ENCODE measurements at regions of chr11 and their contacts with region 1.

Region 1: DNA sequence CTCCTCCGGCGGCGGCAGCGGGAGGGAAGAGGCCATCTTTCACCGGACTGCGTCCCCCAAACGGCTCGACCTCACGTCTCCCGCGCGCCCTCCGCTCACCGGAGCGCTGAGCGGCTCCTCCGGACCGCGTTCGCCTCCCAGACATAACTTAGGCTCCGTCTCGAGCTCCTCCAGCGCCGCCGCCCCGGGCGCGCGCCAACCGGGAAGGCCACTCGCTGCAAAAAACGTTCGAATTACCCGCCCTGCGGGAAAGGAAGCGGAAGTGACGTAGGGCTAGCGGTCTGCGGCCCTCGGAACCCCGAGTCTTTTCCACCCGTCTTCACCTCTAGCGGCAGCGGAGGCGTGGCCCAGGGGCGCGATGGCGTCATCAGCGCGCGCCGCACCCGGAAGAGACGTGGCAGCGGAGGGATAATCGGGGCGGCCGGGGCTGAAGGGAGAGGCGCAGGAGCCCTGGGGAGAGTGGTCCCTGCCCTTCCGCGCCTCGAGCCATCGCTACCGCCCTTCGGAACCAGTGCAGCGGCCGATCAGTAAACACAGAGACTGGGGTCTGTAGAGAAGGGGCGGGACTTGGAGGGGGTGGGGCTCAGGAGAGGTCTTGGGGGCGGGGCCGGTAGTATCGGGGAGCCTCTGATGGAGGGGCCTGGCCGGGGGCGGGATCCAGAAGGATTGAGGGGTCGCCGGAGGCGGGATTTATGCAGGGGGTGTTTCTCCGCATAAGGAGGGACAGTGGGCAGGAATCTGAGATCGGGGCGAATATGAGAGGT is at the starts of genes CDCA5 and ZFPL1:
- DNase-seq: peak; percentile 97
- ATAC-seq: peak; percentile 81
- H3K4me3 Mint-ChIP-seq: peak within 1 kb of the TSS; percentile 99
- H3K27ac Mint-ChIP-seq: peak within 1 kb of the TSS; percentile 98
- H3K4me1 Mint-ChIP-seq: peaks cover 41% of the 10 kb centered on the region
- H3K27me3 Mint-ChIP-seq: no peaks in the 10 kb centered on the region
- total RNA-seq, gene CDCA5: 111 to 119 TPM
- total RNA-seq, gene ZFPL1: 24.2 to 31.8 TPM

Region 2: DNA sequence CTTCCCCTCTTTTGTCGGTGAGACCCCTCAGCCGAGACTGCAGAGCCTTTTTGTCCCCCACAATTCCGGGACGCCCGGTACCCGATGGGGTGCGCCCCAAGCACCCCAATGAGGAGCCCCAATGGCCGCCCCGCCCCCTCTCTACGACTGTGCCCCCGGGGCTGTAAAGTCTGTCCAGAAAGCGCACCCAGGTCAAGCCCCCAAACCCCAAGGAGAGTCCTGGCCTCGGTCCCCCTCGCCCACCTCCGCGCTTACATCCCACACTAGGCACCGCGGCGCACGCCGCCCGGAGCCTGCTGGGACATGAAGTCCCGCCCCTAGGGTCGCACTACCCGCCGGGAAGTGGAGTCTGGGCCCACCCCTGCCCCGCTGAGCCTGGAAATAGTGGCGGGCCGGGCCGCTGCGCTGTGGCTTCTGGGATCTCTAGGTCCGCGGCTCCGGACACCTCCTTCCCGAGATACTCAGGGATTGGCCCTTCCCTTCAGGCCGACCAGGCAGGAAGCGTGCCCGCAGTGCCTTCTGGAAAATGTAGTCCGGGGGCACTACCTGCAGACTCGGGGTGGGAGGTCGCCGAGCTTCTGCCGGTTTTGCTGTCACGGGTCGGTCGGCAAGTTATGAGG is 273.6 kb before region 1 on chr11 and contains the start of gene MEN1:
- CTCF ChIA-PET with region 1: no interaction called
- POLR2A ChIA-PET with region 1: no interaction called
- intact Hi-C with region 1: loop called in 1 of 2 experiments (anchors 1 kb)
- DNase-seq: peak; percentile 92
- ATAC-seq: peak; percentile 95
- H3K4me3 Mint-ChIP-seq: peak within 1 kb of the TSS; percentile 93
- H3K27ac Mint-ChIP-seq: peak within 1 kb of the TSS; percentile 85
- H3K4me1 Mint-ChIP-seq: peaks cover 21% of the 10 kb centered on the region
- H3K27me3 Mint-ChIP-seq: no peaks in the 10 kb centered on the region
- total RNA-seq, gene MEN1: 34.8 to 38.5 TPM

Region 3: DNA sequence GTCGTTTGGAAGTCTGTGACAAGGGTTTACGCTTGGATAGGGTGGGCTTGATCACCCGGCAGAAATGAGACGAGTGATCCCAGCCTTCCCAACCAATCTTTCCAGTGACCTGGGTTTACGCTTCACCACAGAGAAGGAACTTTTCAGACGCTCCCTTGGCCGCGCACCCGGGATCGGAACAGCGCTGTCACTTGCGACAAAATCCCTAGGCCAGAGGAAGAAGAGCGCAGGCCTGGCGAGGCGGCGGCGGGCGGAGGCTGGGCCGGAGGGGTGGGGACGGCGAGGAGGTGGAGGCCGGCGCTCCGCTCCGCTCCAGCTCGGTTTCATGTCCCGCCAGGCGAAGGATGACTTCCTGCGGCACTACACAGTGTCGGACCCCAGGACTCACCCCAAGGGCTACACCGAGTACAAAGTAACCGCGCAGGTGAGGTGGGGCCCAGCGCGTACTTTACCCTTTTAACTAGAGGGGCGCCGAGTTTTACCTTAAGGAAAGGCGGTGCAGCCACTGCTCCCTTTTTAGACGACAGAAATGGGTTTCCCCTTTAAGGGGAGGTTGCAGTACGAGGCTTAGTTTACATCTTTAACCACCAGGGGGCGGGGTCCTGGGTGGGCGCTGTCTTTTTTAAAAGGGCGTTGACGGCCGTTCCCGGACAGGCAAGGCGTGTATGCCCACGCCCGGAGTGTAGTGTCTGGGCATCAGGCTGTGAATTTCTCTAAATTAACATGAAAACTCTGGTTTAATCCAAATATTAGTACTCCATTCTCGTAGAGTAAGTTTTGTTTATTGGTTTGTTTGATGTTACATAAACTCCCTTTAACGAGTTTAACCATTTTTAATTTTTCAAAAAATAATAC is 56.6 kb before region 1 on chr11 and contains the start of gene SNX15:
- CTCF ChIA-PET with region 1: no interaction called
- POLR2A ChIA-PET with region 1: no interaction called
- intact Hi-C with region 1: loop called (anchors 1 kb)
- DNase-seq: peak; percentile 94
- ATAC-seq: peak; percentile 91
- H3K4me3 Mint-ChIP-seq: peak within 1 kb of the TSS; percentile 73
- H3K27ac Mint-ChIP-seq: peak within 1 kb of the TSS; percentile 86
- H3K4me1 Mint-ChIP-seq: peaks cover 21% of the 10 kb centered on the region
- H3K27me3 Mint-ChIP-seq: no peaks in the 10 kb centered on the region
- total RNA-seq, gene SNX15: 12.1 to 14.2 TPM

Region 4: DNA sequence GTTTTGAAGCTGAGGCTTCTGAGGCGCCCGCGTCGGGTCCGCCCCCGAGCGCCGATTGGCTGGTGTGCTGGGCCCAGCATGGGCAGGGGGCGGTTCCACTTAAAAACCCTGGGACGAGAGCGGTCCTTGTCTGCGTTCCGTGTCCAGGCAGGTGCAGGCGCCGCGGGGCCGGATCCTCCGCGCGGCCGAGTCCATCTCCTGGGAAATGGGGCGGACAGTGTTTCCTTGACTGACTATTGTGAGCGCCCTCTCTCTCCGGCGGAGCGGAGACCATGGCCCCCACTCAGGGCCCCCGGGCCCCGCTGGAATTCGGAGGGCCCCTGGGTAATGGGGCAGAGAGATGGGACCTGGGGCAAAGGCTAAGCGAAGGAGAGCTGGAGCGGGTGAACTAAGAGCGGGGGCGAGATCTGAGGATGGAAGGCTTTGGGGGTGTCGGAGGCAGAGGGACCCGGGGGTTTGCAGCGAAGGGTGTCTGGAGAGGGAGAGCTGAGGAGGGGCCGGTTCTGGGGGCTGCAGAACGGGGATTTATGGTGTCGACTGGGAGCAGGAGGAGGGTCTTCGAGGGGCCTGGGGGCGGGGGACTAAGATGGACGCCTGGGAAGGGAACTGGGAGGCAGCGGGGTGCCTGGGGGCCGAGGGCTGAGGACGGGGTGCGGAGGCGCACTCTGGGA is 27.9 kb after region 1 on chr11 and contains the start of gene TM7SF2:
- CTCF ChIA-PET with region 1: interaction called, 5 read pairs
- POLR2A ChIA-PET with region 1: interaction called, 4 read pairs
- intact Hi-C with region 1: loop called (anchors 1 to 2 kb)
- DNase-seq: peak; percentile 98
- ATAC-seq: peak; percentile 78
- H3K4me3 Mint-ChIP-seq: peak within 1 kb of the TSS; percentile 83
- H3K27ac Mint-ChIP-seq: peak within 1 kb of the TSS; percentile 74
- H3K4me1 Mint-ChIP-seq: peaks cover 50% of the 10 kb centered on the region
- H3K27me3 Mint-ChIP-seq: no peaks in the 10 kb centered on the region
- total RNA-seq, gene TM7SF2: 17.4 to 18.1 TPM

Region 5: DNA sequence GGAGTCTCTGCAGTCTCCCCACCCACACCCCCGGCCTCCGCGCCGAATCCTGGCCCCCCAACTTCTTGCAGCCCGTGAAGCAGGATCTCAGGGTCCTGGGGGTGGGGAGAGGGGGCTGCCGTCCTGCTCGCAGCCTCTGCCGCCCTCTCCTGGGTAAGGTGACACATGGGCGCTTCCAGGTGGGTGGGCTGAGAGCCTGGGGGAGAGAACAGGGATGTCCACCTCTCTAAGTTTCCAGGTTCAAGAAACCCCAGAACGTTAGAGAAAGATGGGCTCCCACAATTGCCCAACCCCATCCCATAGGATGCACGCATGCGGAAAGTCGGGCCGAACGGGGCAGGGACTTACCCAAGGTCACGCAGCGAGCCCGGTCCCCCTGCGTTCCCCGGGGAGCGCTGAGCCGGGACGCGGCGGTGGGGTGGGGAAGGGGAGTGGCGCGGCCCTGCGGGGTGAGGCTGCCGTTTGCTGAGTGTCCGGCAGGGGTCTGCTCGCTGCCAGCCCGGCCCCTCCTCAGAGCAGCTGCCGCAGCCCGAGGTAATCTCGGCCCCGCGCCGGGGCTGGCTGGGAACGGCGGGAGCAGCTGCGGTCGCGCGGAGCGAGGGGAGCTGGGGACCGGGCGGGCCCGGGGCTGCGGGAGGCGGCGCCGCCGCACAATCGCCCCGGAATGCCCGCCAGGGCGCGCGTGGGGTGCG is 97.0 kb after region 1 on chr11:
- CTCF ChIA-PET with region 1: no interaction called
- POLR2A ChIA-PET with region 1: no interaction called
- intact Hi-C with region 1: loop called in 1 of 2 experiments (anchors 1 kb)
- DNase-seq: peak; percentile 79
- ATAC-seq: peak; percentile 74
- H3K4me3 Mint-ChIP-seq: peak overlapping the region; percentile 79
- H3K27ac Mint-ChIP-seq: peak overlapping the region; percentile 80
- H3K4me1 Mint-ChIP-seq: peaks cover 14% of the 10 kb centered on the region
- H3K27me3 Mint-ChIP-seq: no peaks in the 10 kb centered on the region

Measured in activated CD4-positive, alpha-beta T cell treated with anti-CD3 and anti-CD28 coated beads for 36 hours (primary cell).